Spleen (tissue), 13 donors: ENCODE measurements at regions of chrX and their contacts with region 1.

Region 1: GRCh38 chrX:24495700-24496099 is 30.6 kb downstream of the PDK3 start:
- DNase-seq: no peak
- H3K4me3 ChIP-seq: no peak overlapping the region
- H3K27ac ChIP-seq: no peak overlapping the region
- H3K4me1 ChIP-seq: peaks cover 0 to 33% (median 3%) of the 10 kb centered on the region in 6 donors
- H3K27me3 ChIP-seq: no peaks in the 10 kb centered on the region
- CTCF ChIP-seq: no peak
- POLR2A ChIP-seq: no peak

Region 2: GRCh38 chrX:24398725-24399124 is 97.0 kb before region 1 on chrX:
- intact Hi-C with region 1: loop called (anchors 2 kb)
- DNase-seq: no peak
- H3K4me3 ChIP-seq: no peak overlapping the region
- H3K27ac ChIP-seq: no peak overlapping the region
- H3K4me1 ChIP-seq: no peaks in the 10 kb centered on the region
- H3K27me3 ChIP-seq: peaks cover 0 to 6% (median 0%) of the 10 kb centered on the region in 7 donors
- CTCF ChIP-seq: no peak
- POLR2A ChIP-seq: no peak